Caco-2 (cell line): ENCODE measurements at regions of chr2 and their contacts with region 1.

Region 1: GRCh38 chr2:25617948-25618641 is 55.3 kb downstream of the DTNB start:
- DNase-seq: no peak
- H3K4me3 ChIP-seq: no peak overlapping the region
- H3K4me3 Mint-ChIP-seq: peak overlapping the region; percentile 43
- H3K27ac Mint-ChIP-seq: peak overlapping the region; percentile 37
- H3K4me1 ChIP-seq: peaks cover 63% of the 10 kb centered on the region
- H3K4me1 Mint-ChIP-seq: peaks cover 52% of the 10 kb centered on the region
- H3K27me3 ChIP-seq: no peaks in the 10 kb centered on the region
- H3K27me3 Mint-ChIP-seq: no peaks in the 10 kb centered on the region
- CTCF ChIP-seq: no peak

Region 2: GRCh38 chr2:25420820-25421237 is 197.3 kb before region 1 on chr2:
- CTCF ChIA-PET with region 1: no interaction called
- POLR2A ChIA-PET with region 1: no interaction called
- intact Hi-C with region 1: no loop called
- DNase-seq: no peak
- H3K4me3 ChIP-seq: no peak overlapping the region
- H3K4me3 Mint-ChIP-seq: no peak overlapping the region
- H3K27ac Mint-ChIP-seq: no peak overlapping the region
- H3K4me1 ChIP-seq: peaks cover 10% of the 10 kb centered on the region; the same call in 1 of the 2 replicates
- H3K4me1 Mint-ChIP-seq: peaks cover 7% of the 10 kb centered on the region
- H3K27me3 ChIP-seq: no peaks in the 10 kb centered on the region
- H3K27me3 Mint-ChIP-seq: no peaks in the 10 kb centered on the region
- CTCF ChIP-seq: no peak

Region 3: GRCh38 chr2:25664183-25664964 is 46.3 kb after region 1 on chr2:
- CTCF ChIA-PET with region 1: interaction called, 13 read pairs
- POLR2A ChIA-PET with region 1: no interaction called
- intact Hi-C with region 1: no loop called
- DNase-seq: peak; percentile 74 to 83
- H3K4me3 ChIP-seq: no peak overlapping the region
- H3K4me3 Mint-ChIP-seq: no peak overlapping the region
- H3K27ac Mint-ChIP-seq: peak overlapping the region; percentile 21
- H3K4me1 ChIP-seq: peaks cover 12% of the 10 kb centered on the region; the same call in 1 of the 2 replicates
- H3K4me1 Mint-ChIP-seq: peaks cover 39% of the 10 kb centered on the region
- H3K27me3 ChIP-seq: no peaks in the 10 kb centered on the region
- H3K27me3 Mint-ChIP-seq: no peaks in the 10 kb centered on the region
- CTCF ChIP-seq: peak; percentile 81 to 88